ENCODE measurements at regions of chr2 and their contacts with region 1.

Region 1: DNA sequence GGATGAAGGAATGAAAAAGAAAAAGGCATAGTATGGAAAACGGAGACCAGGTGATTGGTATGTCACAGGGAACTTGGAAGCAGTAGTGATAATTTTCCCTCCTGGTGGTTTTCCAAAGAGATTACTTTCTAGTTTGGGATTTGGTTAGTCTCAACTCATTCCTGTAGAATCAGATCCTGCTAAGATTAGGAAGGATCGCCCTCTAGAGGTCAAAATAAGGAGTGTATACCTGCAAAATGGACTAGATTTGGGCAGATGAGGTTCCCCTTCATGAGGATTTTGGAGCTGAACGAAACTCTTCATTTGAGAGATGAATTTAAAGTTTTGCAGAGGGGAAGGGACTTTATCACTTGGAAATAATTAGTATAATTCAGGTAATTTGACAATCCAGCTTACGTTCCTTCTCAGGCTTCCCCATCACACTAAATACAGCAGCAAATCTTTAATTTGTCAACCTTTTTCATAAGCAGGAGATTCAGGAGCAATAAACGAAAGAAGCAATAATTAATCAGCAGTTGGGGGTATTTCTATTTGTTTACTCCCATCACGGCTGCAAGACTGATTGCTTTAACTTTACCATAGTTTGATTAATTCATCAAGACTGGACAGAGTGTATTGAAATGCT is 65.2 kb downstream of the CCDC195 start:
- DNase-seq: no peak
- ATAC-seq: peak; percentile 89
- H3K4me3 ChIP-seq: no peak overlapping the region
- H3K27ac ChIP-seq: no peak overlapping the region
- H3K4me1 ChIP-seq: no peaks in the 10 kb centered on the region
- H3K27me3 ChIP-seq: no peaks in the 10 kb centered on the region
- CTCF ChIP-seq: peak; percentile 71 to 73 (median 72)
- EP300 ChIP-seq: no peak
- POLR2A ChIP-seq: no peak
- RAD21 ChIP-seq: peak; percentile 93

Region 2: DNA sequence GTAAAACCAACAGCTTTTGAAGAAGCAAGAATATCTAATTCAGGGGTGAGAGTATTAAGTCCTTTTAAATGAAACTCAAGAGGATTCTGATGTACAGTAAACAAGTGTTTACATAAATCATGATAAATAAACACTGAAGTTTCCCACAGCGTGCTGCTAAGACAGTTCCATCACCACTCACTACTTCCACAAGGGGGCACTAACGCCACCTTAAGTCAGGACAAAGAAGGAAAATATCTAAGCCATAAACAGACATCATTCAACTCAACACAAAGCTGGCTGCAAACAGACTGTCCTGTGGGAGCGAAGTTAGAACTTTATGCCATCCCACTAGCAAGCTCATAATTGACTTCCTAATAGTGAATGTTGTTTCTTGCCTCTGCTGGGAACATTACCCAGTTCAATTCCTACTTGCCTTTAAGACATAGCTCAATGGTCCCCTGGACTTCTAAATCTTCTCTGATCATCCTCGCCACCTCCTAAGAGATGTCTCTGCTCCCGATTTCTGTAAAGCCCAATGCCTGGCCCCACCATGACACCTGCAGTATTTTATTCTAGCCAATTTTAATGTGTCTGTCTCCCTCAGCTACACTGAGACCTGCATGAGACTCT is 657.2 kb before region 1 on chr2:
- CTCF ChIA-PET with region 1: interaction called, 6 read pairs
- POLR2A ChIA-PET with region 1: no interaction called
- RAD21 ChIA-PET with region 1: no interaction called
- SMC1A ChIA-PET with region 1: interaction called, 4 read pairs
- in situ Hi-C with region 1: loop called (anchors 25 kb)
- intact Hi-C with region 1: no loop called
- DNase-seq: no peak
- ATAC-seq: peak; percentile 87
- H3K4me3 ChIP-seq: no peak overlapping the region
- H3K27ac ChIP-seq: no peak overlapping the region
- H3K4me1 ChIP-seq: no peaks in the 10 kb centered on the region
- H3K27me3 ChIP-seq: peaks cover 0 to 4% of the 10 kb centered on the region in 2 experiments; a peak in 2 of 4 replicates
- CTCF ChIP-seq: peak; percentile 71 to 81 (median 78)
- EP300 ChIP-seq: no peak
- POLR2A ChIP-seq: no peak
- RAD21 ChIP-seq: peak; percentile 71

Region 3: DNA sequence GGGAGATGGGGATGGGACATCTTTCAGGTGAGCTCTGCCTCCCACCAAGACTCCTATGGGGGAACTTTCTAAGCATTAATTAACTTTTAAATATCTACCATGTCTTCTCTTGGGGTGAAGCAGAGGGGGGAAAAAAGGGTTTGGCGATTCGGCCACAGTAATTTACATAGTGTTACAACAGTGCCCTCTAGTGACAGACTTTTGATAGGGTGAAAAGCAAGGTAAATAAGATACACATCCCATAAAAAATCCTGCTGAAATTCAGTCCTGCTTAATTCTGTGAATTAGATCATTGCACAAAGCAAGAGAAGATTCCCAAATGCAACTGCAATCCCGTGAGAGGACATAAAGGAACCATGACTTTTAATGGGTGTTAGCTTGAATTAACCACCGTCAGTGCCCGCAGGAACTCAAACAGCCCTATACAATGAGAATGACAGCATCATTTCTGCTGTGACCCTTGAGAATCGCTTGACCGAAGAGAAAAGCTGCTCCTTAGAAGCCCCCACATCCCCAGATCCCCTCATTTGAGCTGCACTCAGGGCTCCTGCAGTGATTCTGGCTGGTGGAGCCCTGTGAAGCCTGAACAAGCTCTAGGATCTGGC is 281.8 kb before region 1 on chr2:
- CTCF ChIA-PET with region 1: interaction called, 70 read pairs
- POLR2A ChIA-PET with region 1: no interaction called
- RAD21 ChIA-PET with region 1: interaction called, 5 read pairs
- SMC1A ChIA-PET with region 1: interaction called, 11 read pairs
- in situ Hi-C with region 1: no loop called
- intact Hi-C with region 1: no loop called
- DNase-seq: no peak
- ATAC-seq: peak; percentile 78
- H3K4me3 ChIP-seq: no peak overlapping the region
- H3K27ac ChIP-seq: no peak overlapping the region
- H3K4me1 ChIP-seq: no peaks in the 10 kb centered on the region
- H3K27me3 ChIP-seq: no peaks in the 10 kb centered on the region
- CTCF ChIP-seq: peak; percentile 39 to 61 (median 48); a peak in 5 of 6 replicates
- EP300 ChIP-seq: no peak
- POLR2A ChIP-seq: no peak
- RAD21 ChIP-seq: peak; percentile 39

Region 4: GRCh38 chr2:224469374-224469964 is 181.5 kb before region 1 on chr2:
- CTCF ChIA-PET with region 1: interaction called, 11 read pairs
- POLR2A ChIA-PET with region 1: no interaction called
- RAD21 ChIA-PET with region 1: interaction called, 8 read pairs
- SMC1A ChIA-PET with region 1: interaction called, 6 read pairs
- in situ Hi-C with region 1: no loop called
- intact Hi-C with region 1: no loop called
- DNase-seq: no peak
- ATAC-seq: no peak; the same call in 1 of the 3 replicates
- H3K4me3 ChIP-seq: no peak overlapping the region
- H3K27ac ChIP-seq: no peak overlapping the region
- H3K4me1 ChIP-seq: no peaks in the 10 kb centered on the region
- H3K27me3 ChIP-seq: no peaks in the 10 kb centered on the region
- CTCF ChIP-seq: no peak
- EP300 ChIP-seq: no peak
- POLR2A ChIP-seq: peak; percentile 41; the same call in 1 of the 2 replicates
- RAD21 ChIP-seq: no peak

Region 5: GRCh38 chr2:224507789-224508188 is 143.1 kb before region 1 on chr2:
- CTCF ChIA-PET with region 1: interaction called, 10 read pairs
- POLR2A ChIA-PET with region 1: no interaction called
- RAD21 ChIA-PET with region 1: no interaction called
- SMC1A ChIA-PET with region 1: interaction called, 5 read pairs
- in situ Hi-C with region 1: no loop called
- intact Hi-C with region 1: no loop called
- DNase-seq: no peak
- ATAC-seq: no peak
- H3K4me3 ChIP-seq: no peak overlapping the region
- H3K27ac ChIP-seq: no peak overlapping the region
- H3K4me1 ChIP-seq: no peaks in the 10 kb centered on the region
- H3K27me3 ChIP-seq: no peaks in the 10 kb centered on the region
- CTCF ChIP-seq: no peak
- EP300 ChIP-seq: no peak
- POLR2A ChIP-seq: no peak
- RAD21 ChIP-seq: no peak

Region 6: GRCh38 chr2:224611938-224612337 is 39.0 kb before region 1 on chr2:
- CTCF ChIA-PET with region 1: interaction called, 22 read pairs
- POLR2A ChIA-PET with region 1: no interaction called
- RAD21 ChIA-PET with region 1: interaction called, 3 read pairs
- SMC1A ChIA-PET with region 1: interaction called, 7 read pairs
- in situ Hi-C with region 1: no loop called
- intact Hi-C with region 1: no loop called
- DNase-seq: no peak
- ATAC-seq: peak; percentile 64
- H3K4me3 ChIP-seq: no peak overlapping the region
- H3K27ac ChIP-seq: no peak overlapping the region
- H3K4me1 ChIP-seq: no peaks in the 10 kb centered on the region
- H3K27me3 ChIP-seq: no peaks in the 10 kb centered on the region; a peak in 1 of 4 replicates
- CTCF ChIP-seq: peak in 2 of 3 experiments; percentile 23 to 27; a peak in 1 of 6 replicates
- EP300 ChIP-seq: no peak
- POLR2A ChIP-seq: no peak
- RAD21 ChIP-seq: peak; percentile 43

Region 7: GRCh38 chr2:224778474-224778877 is 127.5 kb after region 1 on chr2:
- CTCF ChIA-PET with region 1: interaction called, 145 read pairs
- POLR2A ChIA-PET with region 1: interaction called, 3 read pairs
- RAD21 ChIA-PET with region 1: interaction called, 35 read pairs
- SMC1A ChIA-PET with region 1: interaction called, 53 read pairs
- in situ Hi-C with region 1: no loop called
- intact Hi-C with region 1: loop called (anchors 1 kb)
- DNase-seq: peak; percentile 39
- ATAC-seq: peak; percentile 91
- H3K4me3 ChIP-seq: no peak overlapping the region
- H3K27ac ChIP-seq: no peak overlapping the region
- H3K4me1 ChIP-seq: no peaks in the 10 kb centered on the region
- H3K27me3 ChIP-seq: no peaks in the 10 kb centered on the region
- CTCF ChIP-seq: peak; percentile 67 to 79 (median 77)
- EP300 ChIP-seq: no peak
- POLR2A ChIP-seq: no peak
- RAD21 ChIP-seq: peak; percentile 82

Measured in GM12878 (cell line).